Calu3 (cell line): ENCODE measurements at regions of chr11 and their contacts with region 1.

Region 1: GRCh38 chr11:8263769-8264410 is at the start of gene LMO1:
- DNase-seq: peak; percentile 83
- H3K4me3 Mint-ChIP-seq: peak within 1 kb of the TSS; percentile 70
- H3K27ac Mint-ChIP-seq: no peak within 1 kb of the TSS
- H3K4me1 Mint-ChIP-seq: peaks cover 11% of the 10 kb centered on the region
- H3K27me3 Mint-ChIP-seq: peaks cover 93% of the 10 kb centered on the region
- CTCF ChIP-seq: peak; percentile 82
- total RNA-seq, gene LMO1: not detected in 2 replicates

Region 2: GRCh38 chr11:8225589-8226036 is 38.3 kb before region 1 on chr11:
- CTCF ChIA-PET with region 1: interaction called, 5 read pairs
- intact Hi-C with region 1: loop called (anchors 5 kb)
- DNase-seq: peak; percentile 73
- H3K4me3 Mint-ChIP-seq: no peak overlapping the region
- H3K27ac Mint-ChIP-seq: no peak overlapping the region
- H3K4me1 Mint-ChIP-seq: no peaks in the 10 kb centered on the region
- H3K27me3 Mint-ChIP-seq: peaks cover 69% of the 10 kb centered on the region
- CTCF ChIP-seq: peak; percentile 94